ENCODE measurements at regions of chr12 and their contacts with region 1.

Region 1: GRCh38 chr12:6215932-6216494 is 15.8 kb downstream of the CD9 start:
- DNase-seq: peak; percentile 47
- ATAC-seq: peak; percentile 11
- H3K4me3 Mint-ChIP-seq: peak overlapping the region; percentile 58
- H3K27ac Mint-ChIP-seq: peak overlapping the region; percentile 100
- H3K4me1 Mint-ChIP-seq: peaks cover 99% of the 10 kb centered on the region
- H3K27me3 Mint-ChIP-seq: no peaks in the 10 kb centered on the region
- CTCF ChIP-seq: no peak

Region 2: GRCh38 chr12:6056406-6057240 is 159.4 kb before region 1 on chr12:
- CTCF ChIA-PET with region 1: interaction called, 14 read pairs
- POLR2A ChIA-PET with region 1: no interaction called
- DNase-seq: peak; percentile 70
- ATAC-seq: peak; percentile 79
- H3K4me3 Mint-ChIP-seq: peak overlapping the region; percentile 59
- H3K27ac Mint-ChIP-seq: no peak overlapping the region
- H3K4me1 Mint-ChIP-seq: peaks cover 29% of the 10 kb centered on the region
- H3K27me3 Mint-ChIP-seq: peaks cover 6% of the 10 kb centered on the region
- CTCF ChIP-seq: no peak

Region 3: DNA sequence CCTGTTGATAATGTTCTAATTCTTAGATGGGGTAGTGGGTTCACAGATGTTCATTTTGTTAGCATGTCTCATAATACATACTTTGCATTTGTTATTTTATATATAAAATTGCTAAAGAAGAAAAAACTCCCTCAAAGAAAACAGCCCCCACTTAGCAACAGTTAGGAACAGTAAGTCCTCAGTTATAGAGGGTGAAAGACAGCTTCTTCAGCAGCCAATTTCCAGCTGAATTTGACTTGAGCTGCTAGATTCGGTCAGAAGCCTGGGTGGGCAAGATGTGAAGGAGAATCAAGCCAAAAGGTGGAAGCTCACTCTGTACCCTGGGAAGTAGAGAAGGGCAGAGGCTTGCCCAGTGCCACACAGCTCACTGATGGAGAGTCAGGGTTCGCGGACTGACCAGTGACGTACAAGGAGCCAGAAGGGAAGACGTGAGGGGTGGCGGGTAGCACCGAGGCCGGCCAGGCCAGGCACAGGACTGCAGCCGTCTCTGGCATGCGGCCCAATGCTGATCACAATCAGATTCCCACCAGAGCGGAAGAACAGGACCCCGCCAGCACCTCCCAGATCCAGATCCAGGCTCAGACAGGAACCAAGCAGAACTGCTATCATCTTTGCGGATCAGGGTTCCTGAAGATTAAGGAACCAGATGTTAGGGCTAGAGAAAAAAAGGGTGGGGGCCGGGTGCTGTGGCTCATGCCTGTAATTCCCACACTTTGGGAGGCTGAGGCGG is 61.1 kb before region 1 on chr12:
- CTCF ChIA-PET with region 1: no interaction called
- POLR2A ChIA-PET with region 1: no interaction called
- DNase-seq: no peak
- ATAC-seq: no peak
- H3K4me3 Mint-ChIP-seq: no peak overlapping the region
- H3K27ac Mint-ChIP-seq: no peak overlapping the region
- H3K4me1 Mint-ChIP-seq: 0 out of 2 replicates have a peak, but pooled peaks cover 6% of the 10 kb centered on the region
- H3K27me3 Mint-ChIP-seq: no peaks in the 10 kb centered on the region
- CTCF ChIP-seq: no peak

Region 4: GRCh38 chr12:6167327-6168259 is 48.4 kb before region 1 on chr12:
- CTCF ChIA-PET with region 1: no interaction called
- POLR2A ChIA-PET with region 1: no interaction called
- DNase-seq: no peak
- ATAC-seq: no peak
- H3K4me3 Mint-ChIP-seq: no peak overlapping the region
- H3K27ac Mint-ChIP-seq: no peak overlapping the region
- H3K4me1 Mint-ChIP-seq: no peaks in the 10 kb centered on the region
- H3K27me3 Mint-ChIP-seq: no peaks in the 10 kb centered on the region
- CTCF ChIP-seq: no peak

Region 5: GRCh38 chr12:6205144-6205539 is 10.9 kb before region 1 on chr12:
- CTCF ChIA-PET with region 1: interaction called, 33 read pairs
- POLR2A ChIA-PET with region 1: interaction called, 25 read pairs
- DNase-seq: peak; percentile 75
- ATAC-seq: peak; percentile 88
- H3K4me3 Mint-ChIP-seq: peak overlapping the region; percentile 33
- H3K27ac Mint-ChIP-seq: peak overlapping the region; percentile 98
- H3K4me1 Mint-ChIP-seq: peaks cover 87% of the 10 kb centered on the region
- H3K27me3 Mint-ChIP-seq: no peaks in the 10 kb centered on the region
- CTCF ChIP-seq: no peak

Measured in WTC11 (cell line).